Right ventricle myocardium inferior (tissue), 1 donor: ENCODE measurements at regions of chr3 and their contacts with region 1.

Region 1: GRCh38 chr3:182792901-182793662 is at the start of gene ATP11B:
- DNase-seq: peak; percentile 91
- ATAC-seq: peak; percentile 92
- total RNA-seq, gene ATP11B: 33.0 TPM

Region 2: GRCh38 chr3:182621435-182622240 is 171.4 kb before region 1 on chr3:
- intact Hi-C with region 1: no loop called
- DNase-seq: no peak
- ATAC-seq: no peak

Region 3: DNA sequence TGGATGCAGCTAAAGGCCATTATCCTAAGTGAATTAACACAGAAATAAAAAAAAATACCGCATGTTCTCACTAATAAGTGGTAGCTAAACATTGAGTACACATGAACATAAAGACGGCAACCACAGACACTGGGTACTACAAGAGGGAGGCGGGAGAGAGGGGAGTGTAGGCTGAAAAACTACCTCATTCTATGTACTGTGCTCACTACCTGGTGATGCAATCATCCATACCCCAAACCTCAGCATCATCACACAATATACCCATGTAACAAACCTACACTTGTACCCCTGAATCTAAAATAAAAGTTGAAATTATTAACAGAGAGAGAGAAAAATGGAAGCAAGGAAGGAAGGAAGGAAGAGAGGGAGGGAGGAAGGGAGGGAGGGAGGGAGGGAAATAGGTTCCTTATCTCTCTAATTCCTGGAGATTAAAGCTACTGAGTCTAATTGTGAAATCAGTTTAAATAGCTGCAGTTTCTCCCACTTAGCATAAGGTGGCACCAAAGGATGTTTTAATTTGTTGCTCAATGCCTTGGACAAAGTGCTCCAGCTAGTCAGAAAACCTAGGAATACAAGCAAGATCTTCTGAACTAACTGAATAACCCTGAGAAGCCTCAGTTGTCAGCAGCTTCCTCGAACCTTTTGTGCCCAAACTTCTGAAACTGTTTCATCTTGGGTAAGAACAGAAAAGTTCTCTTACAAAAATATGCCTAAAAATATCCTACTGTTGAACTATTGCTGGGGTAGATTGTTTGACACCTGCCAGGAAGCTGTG is 79.2 kb before region 1 on chr3:
- intact Hi-C with region 1: loop called (anchors 2 kb)
- DNase-seq: no peak
- ATAC-seq: peak; percentile 86

Region 4: GRCh38 chr3:182837855-182838454 is 44.9 kb after region 1 on chr3:
- intact Hi-C with region 1: loop called (anchors 5 kb)
- DNase-seq: no peak
- ATAC-seq: no peak

Region 5: DNA sequence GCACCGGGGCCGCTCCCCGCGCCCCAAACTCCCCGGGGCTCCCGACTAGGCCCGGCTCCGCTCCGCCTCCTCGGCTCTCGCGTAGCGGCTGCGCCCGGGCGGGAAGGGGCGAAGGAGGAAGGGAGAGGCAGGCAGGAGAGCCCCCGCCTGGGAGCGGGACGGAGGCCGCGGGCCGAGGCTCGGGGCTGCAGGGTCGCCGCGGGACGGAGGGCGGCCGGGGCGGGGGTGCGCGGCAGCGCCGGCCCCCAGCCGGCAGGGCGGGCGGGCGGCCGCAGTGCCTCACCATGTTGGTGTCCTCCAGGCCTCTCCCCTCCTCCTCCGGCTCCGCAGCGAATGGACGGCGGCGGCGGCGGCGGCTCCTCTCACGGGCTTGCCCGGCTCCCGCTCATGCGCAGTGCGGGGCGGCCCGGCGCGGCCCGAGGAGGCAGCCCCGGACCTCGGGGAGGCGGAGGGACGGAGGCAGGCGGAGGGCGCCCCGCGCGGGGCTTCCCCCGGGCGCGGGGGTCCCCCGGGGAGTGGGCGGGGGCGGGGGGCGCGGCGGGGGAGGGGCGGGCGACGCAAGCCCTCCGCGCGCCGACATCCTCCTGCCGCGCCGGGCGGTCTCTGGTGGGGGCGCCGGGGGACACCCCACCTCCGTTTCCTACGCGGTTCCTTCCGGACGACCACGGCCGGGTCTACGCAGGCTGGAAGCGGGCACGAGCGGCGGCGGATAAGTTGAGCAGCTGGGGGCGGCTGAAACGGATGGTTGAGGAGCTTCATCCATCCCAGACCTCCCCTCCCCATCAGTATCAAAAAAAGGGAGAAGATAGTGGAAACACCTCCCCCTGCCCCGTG is 187.3 kb after region 1 on chr3 and contains the start of gene DCUN1D1:
- intact Hi-C with region 1: loop called (anchors 10 kb)
- DNase-seq: peak; percentile 96
- ATAC-seq: peak; percentile 97
- total RNA-seq, gene DCUN1D1: 36.9 TPM